Activated CD4-positive, alpha-beta T cell treated with anti-CD3 and anti-CD28 coated beads for 36 hours (primary cell): ENCODE measurements at regions of chr4 and their contacts with region 1.

Region 1: DNA sequence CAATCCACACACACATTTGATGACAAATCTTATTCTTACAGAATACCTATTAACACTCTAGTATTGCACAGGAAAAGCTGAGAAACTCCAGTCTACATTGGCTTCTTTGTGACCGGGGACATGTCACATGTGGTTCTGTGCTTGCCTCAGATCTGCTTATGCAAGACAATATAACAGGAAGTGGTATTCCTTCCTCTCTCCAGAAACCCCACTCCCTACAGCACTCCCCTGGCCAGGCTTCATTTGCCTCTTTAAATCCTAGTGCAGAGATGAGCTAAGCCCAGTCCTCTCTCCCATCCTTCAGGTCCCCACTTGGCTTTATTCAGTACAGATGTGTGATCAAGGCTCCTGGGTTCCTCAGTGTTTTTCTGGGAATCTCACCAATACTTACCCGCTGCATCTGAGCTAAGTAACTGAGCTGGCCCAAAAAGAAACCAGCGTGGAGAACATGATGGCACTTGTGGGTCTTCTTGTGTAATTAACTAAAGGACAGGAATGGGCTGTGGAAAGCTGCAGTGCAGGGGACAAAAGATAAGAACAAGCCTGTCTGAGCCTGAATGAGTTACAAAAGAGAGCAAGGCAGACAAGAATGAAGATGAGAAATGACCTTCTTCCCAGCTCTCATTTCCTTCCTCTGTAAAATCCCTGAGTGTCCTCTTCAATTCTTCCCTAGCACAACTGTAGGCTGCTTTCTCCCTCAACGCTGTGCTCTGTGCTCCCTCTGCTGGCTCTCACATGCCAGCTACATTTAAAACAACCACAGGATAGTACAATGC is 105.6 kb downstream of the HNRNPD start:
- DNase-seq: peak; percentile 68
- ATAC-seq: peak; percentile 97
- H3K4me3 Mint-ChIP-seq: no peak overlapping the region
- H3K27ac Mint-ChIP-seq: no peak overlapping the region
- H3K4me1 Mint-ChIP-seq: peaks cover 22% of the 10 kb centered on the region
- H3K27me3 Mint-ChIP-seq: no peaks in the 10 kb centered on the region

Region 2: DNA sequence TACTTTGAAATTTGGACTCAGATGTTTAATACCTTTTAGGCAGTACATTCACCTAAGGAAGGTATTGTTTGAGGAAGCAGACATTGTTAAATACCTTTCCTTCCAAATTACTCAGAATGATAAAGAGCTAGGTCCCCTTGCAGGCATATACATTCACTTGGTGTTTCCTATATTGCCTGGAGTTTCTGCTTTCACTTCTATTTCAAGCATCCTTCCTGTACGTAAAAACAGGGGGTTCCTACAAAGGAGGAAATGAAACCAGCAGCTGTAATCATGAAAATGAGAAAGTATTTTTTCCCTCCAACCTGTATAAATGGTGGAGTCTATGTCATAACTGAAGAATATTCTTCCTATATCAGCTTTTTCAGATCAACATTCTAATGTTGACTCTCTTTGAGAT is 706.1 kb before region 1 on chr4:
- CTCF ChIA-PET with region 1: no interaction called
- POLR2A ChIA-PET with region 1: no interaction called
- intact Hi-C with region 1: no loop called
- DNase-seq: no peak
- ATAC-seq: peak; percentile 82
- H3K4me3 Mint-ChIP-seq: no peak overlapping the region
- H3K27ac Mint-ChIP-seq: no peak overlapping the region
- H3K4me1 Mint-ChIP-seq: peaks cover 8% of the 10 kb centered on the region
- H3K27me3 Mint-ChIP-seq: no peaks in the 10 kb centered on the region

Region 3: GRCh38 chr4:81913427-81913879 is 354.8 kb before region 1 on chr4:
- CTCF ChIA-PET with region 1: interaction called, 5 read pairs
- POLR2A ChIA-PET with region 1: no interaction called
- intact Hi-C with region 1: loop called in 1 of 2 experiments (anchors 5 kb)
- DNase-seq: peak; percentile 77
- ATAC-seq: peak; percentile 81
- H3K4me3 Mint-ChIP-seq: no peak overlapping the region
- H3K27ac Mint-ChIP-seq: no peak overlapping the region
- H3K4me1 Mint-ChIP-seq: peaks cover 7% of the 10 kb centered on the region
- H3K27me3 Mint-ChIP-seq: peaks cover 7% of the 10 kb centered on the region

Region 4: DNA sequence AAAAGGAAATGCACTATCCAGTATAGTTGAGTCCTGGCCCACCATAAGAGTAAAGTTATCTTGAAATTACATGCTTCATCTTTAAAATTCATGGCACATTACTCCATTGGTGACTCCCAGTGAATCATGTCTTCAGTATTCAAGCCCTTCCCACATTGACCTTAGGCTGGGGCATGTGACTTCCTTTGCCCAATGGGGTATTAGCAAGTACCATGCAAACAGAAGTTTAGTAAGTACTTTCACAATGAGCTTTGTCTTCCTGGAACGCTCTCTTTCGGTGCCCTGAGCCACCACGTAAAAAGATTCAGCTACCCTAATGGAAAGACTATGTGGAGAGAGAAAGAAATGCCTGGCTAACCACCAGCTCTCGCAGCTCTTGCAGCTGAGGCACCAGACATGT is 129.9 kb before region 1 on chr4:
- CTCF ChIA-PET with region 1: no interaction called
- POLR2A ChIA-PET with region 1: no interaction called
- intact Hi-C with region 1: loop called in 1 of 2 experiments (anchors 5 kb)
- DNase-seq: peak; percentile 60
- ATAC-seq: peak; percentile 90
- H3K4me3 Mint-ChIP-seq: no peak overlapping the region
- H3K27ac Mint-ChIP-seq: no peak overlapping the region
- H3K4me1 Mint-ChIP-seq: peaks cover 27% of the 10 kb centered on the region
- H3K27me3 Mint-ChIP-seq: no peaks in the 10 kb centered on the region

Region 5: DNA sequence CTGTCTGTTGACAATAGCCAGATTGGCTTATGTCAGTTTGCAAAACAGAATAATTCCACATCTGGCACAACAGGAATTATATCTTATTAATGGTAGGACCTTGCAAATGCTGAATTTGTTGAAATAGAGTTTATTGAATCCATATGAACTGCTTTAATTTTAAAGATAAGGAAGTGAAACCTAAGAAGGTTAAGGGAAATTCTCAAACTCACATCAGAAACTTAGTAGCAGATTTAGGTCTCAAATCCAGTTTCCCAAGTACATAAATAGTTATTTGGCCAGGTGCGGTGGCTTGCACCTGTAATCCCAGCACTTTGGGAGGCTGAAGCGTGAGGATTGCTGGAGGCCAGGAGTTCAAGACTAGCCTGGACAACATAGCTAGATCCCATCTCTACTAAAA is 11.5 kb before region 1 on chr4:
- CTCF ChIA-PET with region 1: interaction called, 16 read pairs
- POLR2A ChIA-PET with region 1: no interaction called
- intact Hi-C with region 1: no loop called
- DNase-seq: no peak
- ATAC-seq: no peak
- H3K4me3 Mint-ChIP-seq: no peak overlapping the region
- H3K27ac Mint-ChIP-seq: no peak overlapping the region
- H3K4me1 Mint-ChIP-seq: no peaks in the 10 kb centered on the region
- H3K27me3 Mint-ChIP-seq: no peaks in the 10 kb centered on the region

Region 6: DNA sequence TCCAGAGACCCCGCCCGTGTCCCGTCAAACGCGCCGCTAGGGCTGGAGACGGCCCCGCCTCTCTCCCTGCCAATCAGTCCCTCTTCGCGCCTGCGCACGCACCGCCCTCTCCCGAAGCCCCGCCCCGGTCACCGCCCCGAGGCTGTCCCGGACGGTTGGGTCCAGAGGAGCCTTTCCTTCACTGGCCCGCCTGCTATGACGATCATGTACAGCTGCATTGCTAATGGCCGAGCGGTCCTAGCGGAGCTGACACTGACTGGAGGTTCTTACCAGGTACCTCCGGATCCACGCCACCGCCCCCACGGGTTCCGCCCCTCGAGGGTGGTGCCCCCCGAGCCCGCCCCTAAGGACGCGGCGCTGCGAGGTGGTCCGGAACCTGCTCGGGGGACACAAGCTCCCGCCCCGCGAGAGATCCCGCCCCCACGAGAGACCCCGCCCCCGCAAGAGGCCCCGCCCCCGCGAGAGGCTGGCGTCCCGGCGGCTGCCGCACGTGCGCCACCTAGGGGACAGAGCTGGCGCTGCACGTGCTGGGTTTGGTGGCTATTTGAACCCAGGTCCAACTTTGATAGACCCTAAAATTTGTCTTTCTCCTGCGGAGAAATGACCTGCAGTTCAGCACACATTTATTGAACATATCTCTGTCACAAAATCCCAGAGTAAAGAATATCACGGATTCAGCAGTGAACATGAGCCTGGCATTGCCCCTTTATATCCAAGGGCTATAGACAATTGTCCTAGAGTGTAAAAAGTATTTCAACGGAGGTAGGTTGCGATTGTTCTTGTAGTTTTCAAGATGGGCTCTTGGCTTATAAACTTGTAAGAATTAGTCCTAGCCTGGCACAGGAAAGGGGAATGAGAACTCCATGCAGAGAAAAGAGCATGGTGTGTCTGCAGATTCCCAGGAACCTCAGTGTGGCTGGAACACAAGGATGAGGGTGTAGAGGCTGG is 16.9 kb after region 1 on chr4:
- CTCF ChIA-PET with region 1: interaction called, 36 read pairs
- POLR2A ChIA-PET with region 1: no interaction called
- intact Hi-C with region 1: no loop called
- DNase-seq: peak; percentile 100
- ATAC-seq: peak; percentile 99
- H3K4me3 Mint-ChIP-seq: peak overlapping the region; percentile 68
- H3K27ac Mint-ChIP-seq: peak overlapping the region; percentile 62
- H3K4me1 Mint-ChIP-seq: peaks cover 13% of the 10 kb centered on the region
- H3K27me3 Mint-ChIP-seq: no peaks in the 10 kb centered on the region

Region 7: DNA sequence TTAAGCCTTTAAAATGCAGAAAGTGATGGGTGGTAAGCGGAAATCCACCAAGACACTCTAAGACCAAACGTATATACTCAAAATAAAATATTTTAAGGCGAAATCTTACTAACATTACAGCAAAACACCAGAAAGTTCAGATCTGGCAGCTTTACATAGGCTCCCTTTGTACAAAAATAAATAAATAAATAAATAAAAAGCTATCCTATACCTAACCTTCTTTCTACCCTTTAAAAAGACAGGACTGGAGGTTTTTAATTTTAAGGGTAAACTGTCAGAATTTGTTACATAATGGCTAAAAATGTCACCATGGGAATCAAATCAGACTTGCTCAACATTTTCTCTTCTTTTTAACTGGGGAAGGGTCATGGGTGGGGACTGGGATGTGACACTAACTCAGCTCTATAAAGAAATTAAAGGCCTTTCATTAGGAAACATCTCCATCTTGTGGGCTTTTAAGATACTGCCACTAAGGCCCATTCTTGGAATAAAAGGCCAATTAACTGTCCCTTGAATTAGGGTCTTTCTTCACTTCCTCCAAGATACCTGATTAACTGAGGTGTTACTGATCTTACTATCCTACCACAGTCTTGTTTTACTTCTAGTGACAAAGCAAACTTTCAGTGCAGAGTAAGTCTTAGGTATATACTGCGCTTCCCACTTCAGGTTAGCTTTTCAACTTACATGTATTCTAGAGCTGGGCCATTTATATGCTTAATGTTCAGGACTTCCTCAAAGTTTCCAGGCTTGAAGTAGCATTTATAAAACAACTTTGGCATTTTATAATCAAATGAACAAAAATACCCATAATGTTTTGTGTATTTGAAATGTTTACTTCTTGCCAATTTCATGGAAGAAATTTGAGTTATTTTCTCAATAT is 92.3 kb after region 1 on chr4:
- CTCF ChIA-PET with region 1: interaction called, 10 read pairs
- POLR2A ChIA-PET with region 1: no interaction called
- intact Hi-C with region 1: no loop called
- DNase-seq: no peak
- ATAC-seq: peak; percentile 42
- H3K4me3 Mint-ChIP-seq: no peak overlapping the region
- H3K27ac Mint-ChIP-seq: no peak overlapping the region
- H3K4me1 Mint-ChIP-seq: peaks cover 79% of the 10 kb centered on the region
- H3K27me3 Mint-ChIP-seq: no peaks in the 10 kb centered on the region

Region 8: DNA sequence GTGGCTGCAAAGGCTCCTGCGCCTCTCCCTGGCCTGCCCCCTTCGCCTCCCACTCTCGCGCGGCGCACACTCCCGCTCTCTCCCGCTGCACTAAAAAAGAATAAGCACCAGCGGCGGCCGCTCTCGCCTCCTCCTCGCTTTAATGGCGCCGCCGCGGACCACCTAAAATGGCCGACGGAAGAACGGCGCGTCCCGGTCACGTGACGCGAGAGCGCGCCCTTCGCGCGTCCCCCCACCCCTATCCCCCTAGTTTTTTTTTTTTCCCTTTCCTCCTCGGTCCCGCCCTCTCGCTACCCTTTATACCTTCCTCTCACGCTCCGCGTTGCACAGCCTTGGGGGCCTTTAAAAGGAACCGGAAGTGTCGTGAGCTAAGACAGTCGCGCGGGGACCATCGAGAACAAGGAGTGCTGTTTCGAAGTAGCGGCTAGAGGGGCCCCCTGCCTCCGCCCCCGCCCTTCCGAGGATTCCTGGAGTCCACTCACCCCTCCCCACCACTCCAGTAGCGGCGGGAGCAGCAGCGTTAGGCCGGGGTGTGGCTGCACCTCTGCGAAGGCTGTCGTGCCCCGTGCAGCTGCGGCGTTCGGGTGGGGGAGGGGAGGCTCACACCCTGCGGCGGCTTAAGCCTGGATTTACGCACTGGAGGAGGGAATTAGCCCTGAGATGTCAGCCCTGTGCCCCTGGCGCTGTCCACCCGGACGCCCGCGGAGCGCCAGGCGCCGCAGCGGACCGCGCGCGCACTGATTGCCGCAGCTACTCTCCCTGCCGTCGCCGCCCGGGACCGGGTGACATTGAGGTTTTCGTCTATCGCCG is 105.8 kb after region 1 on chr4 and contains the start of gene HNRNPD:
- CTCF ChIA-PET with region 1: no interaction called
- POLR2A ChIA-PET with region 1: no interaction called
- intact Hi-C with region 1: no loop called
- DNase-seq: peak; percentile 97
- ATAC-seq: peak; percentile 90
- H3K4me3 Mint-ChIP-seq: peak within 1 kb of the TSS; percentile 89
- H3K27ac Mint-ChIP-seq: peak within 1 kb of the TSS; percentile 99
- H3K4me1 Mint-ChIP-seq: peaks cover 34% of the 10 kb centered on the region
- H3K27me3 Mint-ChIP-seq: no peaks in the 10 kb centered on the region
- total RNA-seq, gene HNRNPD: 505 to 510 TPM

Region 9: GRCh38 chr4:82939416-82939815 is 671.2 kb after region 1 on chr4:
- CTCF ChIA-PET with region 1: no interaction called
- POLR2A ChIA-PET with region 1: no interaction called
- intact Hi-C with region 1: no loop called
- DNase-seq: no peak
- ATAC-seq: no peak
- H3K4me3 Mint-ChIP-seq: no peak overlapping the region
- H3K27ac Mint-ChIP-seq: no peak overlapping the region
- H3K4me1 Mint-ChIP-seq: no peaks in the 10 kb centered on the region
- H3K27me3 Mint-ChIP-seq: no peaks in the 10 kb centered on the region